Gastrocnemius medialis (tissue), 4 donors: ENCODE measurements at regions of chr3 and their contacts with region 1.

Region 1: GRCh38 chr3:122421101-122421500 is 5.2 kb upstream of the WDR5B start:
- DNase-seq: no peak
- ATAC-seq: no peak
- H3K4me3 ChIP-seq: no peak overlapping the region
- H3K27ac ChIP-seq: peak overlapping the region in 1 of 4 donors; percentile 31
- H3K4me1 ChIP-seq: peaks cover 12 to 14% of the 10 kb centered on the region in 2 donors
- H3K27me3 ChIP-seq: no peaks in the 10 kb centered on the region
- CTCF ChIP-seq: no peak
- POLR2A ChIP-seq: no peak

Region 2: DNA sequence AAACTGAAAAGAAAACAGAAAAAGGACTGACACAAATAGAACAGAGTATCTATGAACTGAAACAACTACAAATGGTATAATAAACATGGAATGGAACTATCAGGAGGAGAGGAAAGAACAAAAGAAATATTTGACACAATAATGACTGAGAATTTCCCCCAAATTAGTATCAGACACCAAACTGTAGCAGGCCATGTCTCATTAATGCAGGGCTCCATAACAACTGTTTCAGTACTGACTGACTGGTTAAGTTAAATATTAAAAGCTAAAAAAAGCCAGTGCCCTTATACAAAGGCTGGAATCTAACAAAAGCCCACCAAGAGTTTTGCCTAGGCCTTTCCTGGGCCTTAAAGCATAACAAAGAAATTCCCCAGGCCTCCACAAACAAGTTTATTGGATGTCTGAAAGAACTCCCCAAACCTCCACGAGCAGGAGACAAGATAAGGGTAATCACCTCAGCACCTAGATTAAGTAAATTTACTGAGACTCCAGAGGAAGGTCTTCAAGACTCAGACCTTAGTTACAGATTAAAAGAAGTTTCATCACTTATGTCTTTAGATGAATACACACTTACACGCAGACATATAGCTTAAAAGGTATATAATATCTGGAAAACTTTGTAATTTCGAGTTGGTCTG is 47.9 kb after region 1 on chr3:
- in situ Hi-C with region 1: no loop called
- intact Hi-C with region 1: loop called (anchors 5 kb)
- DNase-seq: no peak
- ATAC-seq: no peak
- H3K4me3 ChIP-seq: no peak overlapping the region
- H3K27ac ChIP-seq: no peak overlapping the region
- H3K4me1 ChIP-seq: peaks cover 15 to 26% of the 10 kb centered on the region in 2 donors
- H3K27me3 ChIP-seq: no peaks in the 10 kb centered on the region
- CTCF ChIP-seq: no peak
- POLR2A ChIP-seq: no peak